Activated CD4-positive, alpha-beta memory T cell treated with anti-CD3 and anti-CD28 coated beads for 36 hours (primary cell): ENCODE measurements at regions of chr1 and their contacts with region 1.

Region 1: DNA sequence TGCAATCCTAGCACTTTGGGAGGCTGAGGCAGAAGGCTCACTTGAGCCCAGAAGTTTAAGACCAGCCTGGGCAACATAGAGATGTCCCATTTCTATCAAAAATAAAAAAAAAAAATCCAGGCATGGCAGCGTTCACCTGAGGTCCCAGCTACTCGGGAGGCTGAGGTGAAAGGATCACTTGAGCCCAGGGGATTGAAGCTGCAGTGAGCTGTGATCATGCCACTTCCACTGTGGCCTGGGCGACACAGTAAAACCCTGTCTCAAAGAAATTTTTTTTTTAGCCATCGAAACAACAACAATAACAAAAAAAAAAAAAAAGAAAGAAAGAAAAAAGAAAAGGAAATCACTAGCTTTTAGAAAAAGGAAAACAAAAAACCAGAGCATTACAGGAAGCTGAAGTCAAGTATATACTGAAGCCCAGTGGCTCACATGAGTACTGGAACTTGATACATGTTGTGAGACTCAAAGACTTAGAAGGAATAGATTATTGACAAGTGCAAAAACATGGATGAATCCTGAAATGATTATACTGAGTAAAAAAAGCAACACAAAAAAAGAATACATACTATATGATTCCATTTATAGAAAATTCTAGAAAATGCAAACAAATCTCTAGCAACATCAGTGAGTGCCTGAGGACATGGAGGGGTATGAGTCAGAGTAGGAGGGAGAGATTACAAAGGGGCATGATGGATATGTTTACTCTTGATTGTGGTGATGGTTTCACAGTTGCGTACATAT is 6.1 kb upstream of the RABGAP1L start:
- DNase-seq: no peak
- H3K4me3 Mint-ChIP-seq: no peak overlapping the region
- H3K27ac Mint-ChIP-seq: peak overlapping the region; percentile 69
- H3K4me1 Mint-ChIP-seq: peaks cover 35% of the 10 kb centered on the region
- H3K27me3 Mint-ChIP-seq: no peaks in the 10 kb centered on the region

Region 2: GRCh38 chr1:174114788-174115448 is 38.3 kb before region 1 on chr1:
- CTCF ChIA-PET with region 1: no interaction called
- POLR2A ChIA-PET with region 1: no interaction called
- intact Hi-C with region 1: loop called (anchors 2 kb)
- DNase-seq: peak; percentile 10
- H3K4me3 Mint-ChIP-seq: no peak overlapping the region
- H3K27ac Mint-ChIP-seq: no peak overlapping the region
- H3K4me1 Mint-ChIP-seq: peaks cover 3% of the 10 kb centered on the region
- H3K27me3 Mint-ChIP-seq: no peaks in the 10 kb centered on the region